Activated T-helper 2 cell treated with anti-CD3 and anti-CD28 coated beads, Interferon-gamma antibody, Interleukin-2, Interleukin-4, amounts not matched to agents 10 μg/mL and 5 μg/mL and 100 μg/mL, durations not matched to agents 14 hours and 24 hours and 36 hours (primary cell): ENCODE measurements at regions of chr13 and their contacts with region 1.

Region 1: GRCh38 chr13:52450012-52450792 is at the start of gene VPS36:
- DNase-seq: peak; percentile 92
- H3K4me3 Mint-ChIP-seq: peak within 1 kb of the TSS; percentile 95
- H3K27ac Mint-ChIP-seq: peak within 1 kb of the TSS; percentile 91
- H3K4me1 Mint-ChIP-seq: peaks cover 37% of the 10 kb centered on the region
- H3K27me3 Mint-ChIP-seq: no peaks in the 10 kb centered on the region
- total RNA-seq, gene VPS36: 52.3 and 53.5 TPM in 2 replicates

Region 2: GRCh38 chr13:51583875-51584730 is 866.1 kb before region 1 on chr13 and contains the start of gene WDFY2:
- intact Hi-C with region 1: loop called (anchors 2 kb)
- DNase-seq: peak; percentile 99
- H3K4me3 Mint-ChIP-seq: peak within 1 kb of the TSS; percentile 93
- H3K27ac Mint-ChIP-seq: peak within 1 kb of the TSS; percentile 94
- H3K4me1 Mint-ChIP-seq: peaks cover 30% of the 10 kb centered on the region
- H3K27me3 Mint-ChIP-seq: peaks cover under 1% of the 10 kb centered on the region
- total RNA-seq, gene WDFY2: 9.0 and 9.9 TPM in 2 replicates

Region 3: DNA sequence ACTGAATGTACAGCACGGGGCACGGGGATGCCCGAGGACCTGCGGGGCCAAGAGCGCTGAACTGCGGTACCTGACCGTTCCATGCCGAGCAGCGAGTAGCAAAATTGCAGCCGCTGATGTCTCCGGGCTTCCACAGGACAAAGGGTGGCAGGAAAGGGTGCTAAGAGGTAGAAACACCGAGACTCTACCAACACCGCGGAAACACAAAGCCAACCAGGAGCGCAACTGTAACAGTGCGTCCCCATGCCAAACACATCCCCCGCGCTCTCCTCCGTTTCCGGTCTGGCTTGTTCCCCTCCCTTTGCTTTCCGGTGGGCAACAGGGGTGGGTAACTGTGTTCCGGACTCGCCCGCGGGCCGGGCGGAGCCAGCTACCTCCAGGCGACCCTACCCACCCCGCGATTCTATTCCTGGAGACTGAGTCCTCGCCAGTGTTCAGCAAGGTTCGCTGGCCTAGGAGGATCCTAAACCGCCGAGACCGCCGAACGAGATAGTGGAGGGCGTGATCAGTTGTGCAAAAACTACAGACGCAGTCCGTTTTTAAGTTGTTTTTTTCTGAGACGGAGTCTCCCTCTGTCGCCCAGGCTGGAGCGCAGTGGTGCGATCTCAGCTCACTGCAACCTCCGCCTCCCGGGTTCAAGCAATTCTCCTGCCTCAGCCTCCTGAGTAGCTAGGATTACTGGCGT is 255.9 kb before region 1 on chr13:
- intact Hi-C with region 1: loop called (anchors 2 kb)
- DNase-seq: peak; percentile 88
- H3K4me3 Mint-ChIP-seq: peak overlapping the region; percentile 95
- H3K27ac Mint-ChIP-seq: peak overlapping the region; percentile 96
- H3K4me1 Mint-ChIP-seq: peaks cover 9% of the 10 kb centered on the region
- H3K27me3 Mint-ChIP-seq: no peaks in the 10 kb centered on the region

Region 4: DNA sequence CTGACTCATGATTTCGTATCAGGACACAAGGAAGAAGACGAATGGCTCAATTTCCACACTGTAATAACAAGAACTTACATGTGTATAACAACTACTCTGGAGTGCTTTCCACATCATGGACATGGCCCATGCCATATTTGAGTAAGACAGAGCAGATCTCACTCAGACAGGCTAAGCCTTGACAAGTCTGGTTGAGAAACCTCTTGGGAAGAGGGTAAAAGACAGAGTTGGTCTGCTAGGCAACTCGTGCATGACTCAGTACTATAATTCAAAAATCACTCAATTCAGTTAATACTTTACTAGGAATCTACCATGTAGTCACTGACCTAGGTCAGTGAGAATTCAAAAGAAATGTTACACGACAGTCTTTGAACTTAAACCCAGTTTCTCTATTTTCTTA is 38.6 kb before region 1 on chr13:
- intact Hi-C with region 1: loop called (anchors 5 kb)
- DNase-seq: no peak
- H3K4me3 Mint-ChIP-seq: no peak overlapping the region
- H3K27ac Mint-ChIP-seq: peak overlapping the region; percentile 51
- H3K4me1 Mint-ChIP-seq: peaks cover 4% of the 10 kb centered on the region
- H3K27me3 Mint-ChIP-seq: no peaks in the 10 kb centered on the region

Region 5: GRCh38 chr13:52461265-52461664 is 11.1 kb after region 1 on chr13:
- intact Hi-C with region 1: no loop called
- DNase-seq: no peak
- H3K4me3 Mint-ChIP-seq: peak overlapping the region; percentile 61
- H3K27ac Mint-ChIP-seq: peak overlapping the region; percentile 82
- H3K4me1 Mint-ChIP-seq: peaks cover 54% of the 10 kb centered on the region
- H3K27me3 Mint-ChIP-seq: no peaks in the 10 kb centered on the region

Region 6: DNA sequence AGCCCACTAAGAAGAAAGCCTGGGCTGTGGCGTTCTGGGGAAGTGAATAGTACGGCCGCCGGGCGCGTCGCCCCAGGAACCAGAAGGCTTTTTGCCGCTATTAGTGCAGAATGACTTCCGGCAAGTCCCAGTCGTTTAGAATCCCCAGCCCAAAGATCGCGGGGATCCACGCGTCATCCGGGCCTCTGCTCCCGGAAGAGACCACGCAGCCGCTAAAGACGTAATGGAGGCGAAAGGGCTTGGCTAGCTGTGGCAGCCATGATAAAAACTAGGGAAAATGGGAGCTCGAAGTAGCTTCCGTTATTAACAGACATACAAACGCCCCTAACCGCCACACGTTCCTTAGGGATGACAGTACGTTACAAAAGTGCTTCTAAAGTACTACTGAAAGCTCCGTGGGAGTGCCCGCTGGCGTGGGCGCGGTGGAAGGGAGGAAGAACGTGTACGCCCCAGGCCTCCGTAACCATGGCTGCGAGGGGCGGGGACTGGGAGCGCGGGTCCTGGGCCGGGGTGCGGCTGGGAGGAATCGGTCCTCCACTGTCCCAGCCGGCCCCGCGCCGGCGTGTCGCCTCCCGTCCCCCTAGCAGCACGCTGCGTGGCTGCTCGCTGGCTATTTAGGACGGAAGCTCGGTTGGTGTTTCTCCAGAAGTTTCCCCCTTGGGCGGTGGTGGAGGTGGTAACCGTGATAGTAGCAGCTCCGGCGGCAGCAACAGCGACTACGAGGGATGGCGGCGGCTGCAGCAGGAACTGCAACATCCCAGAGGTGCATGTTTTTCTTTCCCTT is 202.2 kb after region 1 on chr13 and contains the start of gene SUGT1:
- intact Hi-C with region 1: loop called (anchors 2 kb)
- DNase-seq: peak; percentile 94
- H3K4me3 Mint-ChIP-seq: no peak within 1 kb of the TSS
- H3K27ac Mint-ChIP-seq: no peak within 1 kb of the TSS
- H3K4me1 Mint-ChIP-seq: peaks cover 14% of the 10 kb centered on the region
- H3K27me3 Mint-ChIP-seq: no peaks in the 10 kb centered on the region
- total RNA-seq, gene SUGT1: 66.5 and 72.3 TPM in 2 replicates

Region 7: GRCh38 chr13:52686381-52686780 is 236.2 kb after region 1 on chr13:
- intact Hi-C with region 1: no loop called
- DNase-seq: no peak
- H3K4me3 Mint-ChIP-seq: no peak overlapping the region
- H3K27ac Mint-ChIP-seq: no peak overlapping the region
- H3K4me1 Mint-ChIP-seq: peaks cover 3% of the 10 kb centered on the region
- H3K27me3 Mint-ChIP-seq: no peaks in the 10 kb centered on the region